Colonic mucosa (tissue), 4 donors: ENCODE measurements at regions of chr3 and their contacts with region 1.

Region 1: GRCh38 chr3:63232739-63233365 is 45.3 kb upstream of the SYNPR start:
- DNase-seq: no peak
- H3K4me3 ChIP-seq: no peak overlapping the region
- H3K27ac ChIP-seq: no peak overlapping the region
- H3K4me1 ChIP-seq: no peaks in the 10 kb centered on the region
- H3K27me3 ChIP-seq: no peaks in the 10 kb centered on the region
- CTCF ChIP-seq: peak; percentile 27

Region 2: GRCh38 chr3:62622553-62623193 is 610.2 kb before region 1 on chr3:
- intact Hi-C with region 1: loop called (anchors 5 kb)
- DNase-seq: peak; percentile 18
- H3K4me3 ChIP-seq: no peak overlapping the region
- H3K27ac ChIP-seq: no peak overlapping the region
- H3K4me1 ChIP-seq: no peaks in the 10 kb centered on the region
- H3K27me3 ChIP-seq: no peaks in the 10 kb centered on the region
- CTCF ChIP-seq: peak; percentile 51

Region 3: DNA sequence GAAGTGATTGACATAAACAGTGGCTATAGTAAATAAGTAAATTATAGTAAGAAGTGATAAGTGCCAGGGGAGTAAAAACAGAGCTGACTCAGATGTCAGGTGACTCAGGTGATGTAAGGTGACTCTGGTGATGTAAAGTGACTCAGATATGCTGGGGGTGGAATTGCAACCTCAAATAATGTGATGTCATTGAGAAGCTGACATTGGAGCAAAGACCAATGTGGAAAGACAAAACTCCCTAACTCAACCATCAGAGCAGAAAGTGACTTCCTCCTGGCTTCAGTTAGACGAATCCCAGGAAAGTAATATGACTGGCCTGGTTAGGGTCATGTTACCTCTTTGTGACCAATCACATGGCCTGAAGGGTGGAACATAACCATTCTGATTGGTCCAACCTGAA is 275.5 kb after region 1 on chr3:
- intact Hi-C with region 1: no loop called
- DNase-seq: peak; percentile 50
- H3K4me3 ChIP-seq: no peak overlapping the region
- H3K27ac ChIP-seq: peak overlapping the region; percentile 65
- H3K4me1 ChIP-seq: no peaks in the 10 kb centered on the region
- H3K27me3 ChIP-seq: no peaks in the 10 kb centered on the region
- CTCF ChIP-seq: no peak